Mucosa of descending colon (tissue), 3 donors: ENCODE measurements at regions of chr13 and their contacts with region 1.

Region 1: DNA sequence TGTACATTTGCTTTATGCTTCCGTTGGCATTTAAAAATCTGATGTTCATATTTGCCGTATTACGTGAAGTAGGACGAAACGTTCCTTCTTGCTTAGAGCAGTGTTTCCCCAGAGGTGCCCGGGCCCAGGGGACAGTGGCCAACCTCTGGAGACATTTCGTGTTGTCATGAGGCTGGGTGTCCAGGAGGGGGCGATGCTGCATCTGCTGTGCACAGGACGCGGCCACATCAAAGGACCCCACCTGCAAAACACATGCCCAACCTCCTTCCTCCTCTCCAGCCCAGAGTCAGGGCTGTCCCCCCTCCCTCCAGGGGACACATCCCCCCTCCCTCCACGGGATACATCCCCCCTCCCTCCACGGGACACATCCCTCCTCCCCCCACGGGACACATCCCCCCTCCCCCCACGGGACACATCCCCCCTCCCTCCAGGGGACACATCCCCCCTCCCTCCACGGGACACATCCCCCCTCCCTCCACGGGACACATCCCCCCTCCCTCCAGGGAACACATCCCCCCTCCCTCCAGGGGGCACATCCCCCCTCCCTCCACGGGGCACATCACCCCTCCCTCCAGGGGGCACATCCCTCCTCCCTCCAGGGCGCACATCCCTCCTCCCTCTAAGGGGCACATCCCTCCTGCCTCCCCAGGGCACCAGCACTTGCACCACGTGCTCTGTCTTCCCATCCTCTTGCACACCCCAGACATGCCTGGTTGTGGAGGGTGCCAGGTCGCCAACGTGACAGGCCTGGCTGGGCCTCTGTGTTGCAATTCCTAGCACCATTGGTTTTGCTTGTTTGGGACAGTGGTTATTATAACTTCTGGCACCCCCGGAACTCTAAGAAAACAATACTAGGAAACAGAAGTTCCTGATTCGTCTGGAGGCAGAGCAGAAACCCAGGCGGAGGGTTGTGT is 46.7 kb downstream of the GAS6 start:
- DNase-seq: peak; percentile 90 to 96 (median 94)
- ATAC-seq: peak; percentile 86
- H3K4me3 ChIP-seq: no peak overlapping the region
- H3K4me1 ChIP-seq: no peaks in the 10 kb centered on the region
- CTCF ChIP-seq: peak; percentile 76

Region 2: DNA sequence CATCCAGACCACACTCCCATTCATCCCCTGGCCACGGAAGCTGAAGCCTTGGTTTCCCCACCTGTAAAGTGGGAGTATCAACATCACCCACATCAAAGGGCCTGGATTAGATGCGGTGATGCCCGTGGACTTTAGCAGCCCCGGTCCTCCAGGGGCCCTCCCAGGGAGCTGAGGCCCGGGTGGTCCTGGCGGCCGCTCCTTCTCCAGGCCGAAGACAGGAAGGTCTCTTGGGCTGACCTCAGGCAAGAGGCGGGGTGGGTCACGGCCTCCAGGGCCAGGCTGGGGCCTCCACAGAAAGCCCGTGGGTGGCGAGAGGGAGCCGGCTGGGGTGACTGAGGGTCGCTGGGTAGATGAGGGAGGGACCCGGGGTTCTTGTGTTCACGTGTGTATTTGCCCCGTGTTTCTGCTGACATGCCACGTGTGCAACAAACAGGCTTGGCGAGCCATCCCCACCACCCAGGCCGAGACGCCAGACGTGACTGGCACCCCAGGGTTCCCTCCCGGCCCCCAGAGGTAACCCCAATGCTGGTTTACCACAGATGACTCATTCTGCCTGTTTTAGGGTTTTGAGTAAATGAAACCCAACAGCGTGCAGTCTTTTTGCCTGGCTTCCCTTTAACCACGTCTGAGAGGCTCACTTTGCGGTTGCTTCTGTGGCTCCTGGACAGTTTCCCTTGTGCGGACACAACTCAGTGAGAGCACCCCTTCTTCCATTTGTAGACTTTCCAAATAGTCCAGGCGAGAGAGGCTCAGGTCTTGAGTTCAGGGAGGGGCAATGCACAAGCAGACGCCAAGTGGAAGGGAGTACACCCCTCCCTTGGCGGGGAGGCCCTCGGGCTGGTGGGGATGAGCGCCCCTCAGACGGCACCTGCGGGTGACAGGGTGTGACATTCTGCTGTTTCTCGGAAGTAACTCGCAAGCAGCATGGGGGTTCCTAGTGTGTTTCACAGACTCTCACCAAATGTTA is 113.8 kb after region 1 on chr13:
- intact Hi-C with region 1: loop called in 1 of 2 experiments (anchors 10 kb)
- DNase-seq: no peak
- ATAC-seq: no peak
- H3K4me3 ChIP-seq: no peak overlapping the region
- H3K4me1 ChIP-seq: no peaks in the 10 kb centered on the region
- CTCF ChIP-seq: no peak

Region 3: DNA sequence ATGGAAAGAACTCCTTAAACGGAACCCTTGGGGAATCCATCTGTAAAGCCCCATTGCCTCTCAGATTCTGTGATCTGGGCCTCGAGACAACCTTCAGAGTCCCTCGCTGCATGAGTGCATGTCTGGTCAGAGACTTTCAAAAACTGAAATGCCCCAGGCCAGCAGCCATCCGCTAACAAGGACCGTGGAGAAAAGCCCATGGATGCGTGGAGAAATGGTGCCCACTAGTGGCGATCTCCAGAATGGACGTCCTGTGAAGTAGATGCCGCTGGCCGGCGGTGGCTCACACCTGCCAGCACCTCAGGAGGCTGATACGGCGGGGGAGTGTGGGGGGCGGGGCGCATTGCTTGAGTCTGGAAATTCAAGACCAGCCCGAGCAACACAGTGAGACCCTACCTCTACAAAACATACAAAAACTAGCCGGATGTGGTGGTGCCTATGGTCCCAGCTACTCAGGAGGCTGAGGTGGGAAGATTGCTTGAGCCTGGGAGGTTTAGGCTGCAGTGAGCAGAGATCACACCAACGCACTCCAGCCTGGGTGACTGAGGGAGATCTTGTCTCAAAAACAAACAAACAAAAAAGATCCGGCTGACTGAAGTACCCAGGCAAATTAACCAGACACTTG is 409.6 kb after region 1 on chr13:
- intact Hi-C with region 1: loop called in 1 of 2 experiments (anchors 5 kb)
- DNase-seq: peak; percentile 82 to 95 (median 89)
- ATAC-seq: peak; percentile 98
- H3K4me3 ChIP-seq: no peak overlapping the region
- H3K4me1 ChIP-seq: no peaks in the 10 kb centered on the region
- CTCF ChIP-seq: peak; percentile 80